ENCODE measurements at regions of chrX and their contacts with region 1.

Region 1: DNA sequence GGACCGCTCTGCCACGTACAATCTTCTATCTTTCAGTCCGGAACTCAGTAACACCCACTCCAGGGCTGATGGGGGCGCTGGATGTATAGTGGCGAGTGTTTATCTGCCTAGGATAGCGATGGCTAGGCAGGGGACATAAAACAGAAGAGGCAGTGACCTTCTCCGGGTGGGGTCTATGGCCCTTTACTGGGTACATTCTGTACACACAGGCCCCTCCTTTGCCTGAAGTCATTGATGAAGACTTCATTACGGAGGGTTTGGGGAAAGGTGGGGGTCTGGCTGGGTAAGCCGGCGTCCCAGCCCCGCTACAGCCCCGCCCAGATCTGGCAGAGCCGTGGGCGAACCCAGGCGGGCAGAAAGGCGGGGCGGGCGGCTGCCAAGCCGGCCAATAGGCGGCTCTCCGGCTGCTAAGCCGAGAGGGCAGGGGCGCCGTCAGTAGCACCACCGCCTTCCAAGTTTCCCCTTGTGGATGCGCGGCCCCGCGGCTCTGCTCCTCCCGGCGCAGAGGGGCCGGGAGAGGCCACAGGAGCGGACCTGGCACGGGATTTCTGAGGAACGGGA is at the start of gene CHST7:
- DNase-seq: peak; percentile 73
- H3K4me3 Mint-ChIP-seq: peak within 1 kb of the TSS; percentile 76
- H3K27ac Mint-ChIP-seq: peak within 1 kb of the TSS; percentile 91
- H3K4me1 Mint-ChIP-seq: peaks cover 47% of the 10 kb centered on the region
- H3K27me3 Mint-ChIP-seq: no peaks in the 10 kb centered on the region
- total RNA-seq, gene CHST7: 5.1 to 6.1 TPM

Region 2: GRCh38 chrX:46446727-46447378 is 126.6 kb before region 1 on chrX:
- CTCF ChIA-PET with region 1: no interaction called
- POLR2A ChIA-PET with region 1: no interaction called
- intact Hi-C with region 1: loop called (anchors 10 kb)
- DNase-seq: peak; percentile 91
- H3K4me3 Mint-ChIP-seq: peak overlapping the region; percentile 81
- H3K27ac Mint-ChIP-seq: peak overlapping the region; percentile 90
- H3K4me1 Mint-ChIP-seq: peaks cover 15% of the 10 kb centered on the region
- H3K27me3 Mint-ChIP-seq: no peaks in the 10 kb centered on the region

Region 3: DNA sequence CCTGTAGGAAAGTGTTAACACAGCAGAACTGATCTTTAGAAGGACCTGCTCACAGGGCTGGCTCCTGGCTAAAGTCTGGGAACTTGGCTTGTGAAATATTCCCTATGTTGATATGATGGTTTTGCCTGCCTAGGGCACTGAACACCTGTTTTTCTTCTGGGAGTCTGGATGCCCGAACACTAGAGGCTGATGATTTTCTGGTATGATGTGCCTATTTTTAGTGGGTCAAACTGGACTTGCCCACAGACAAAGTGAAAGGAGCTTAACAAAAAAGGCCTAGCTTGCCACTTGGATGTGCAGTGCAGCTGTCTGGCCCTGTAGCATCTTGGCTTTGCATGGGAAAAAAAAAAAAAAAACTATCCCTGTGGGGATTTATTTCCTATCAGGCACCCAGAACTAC is 67.3 kb before region 1 on chrX:
- CTCF ChIA-PET with region 1: no interaction called
- POLR2A ChIA-PET with region 1: no interaction called
- intact Hi-C with region 1: no loop called
- DNase-seq: no peak
- H3K4me3 Mint-ChIP-seq: no peak overlapping the region
- H3K27ac Mint-ChIP-seq: no peak overlapping the region
- H3K4me1 Mint-ChIP-seq: no peaks in the 10 kb centered on the region
- H3K27me3 Mint-ChIP-seq: no peaks in the 10 kb centered on the region

Region 4: GRCh38 chrX:46588263-46588662 is 14.9 kb after region 1 on chrX:
- CTCF ChIA-PET with region 1: interaction called, 6 read pairs
- POLR2A ChIA-PET with region 1: interaction called, 12 read pairs
- intact Hi-C with region 1: loop called (anchors 1 kb)
- DNase-seq: peak; percentile 61
- H3K4me3 Mint-ChIP-seq: peak overlapping the region; percentile 65
- H3K27ac Mint-ChIP-seq: peak overlapping the region; percentile 88
- H3K4me1 Mint-ChIP-seq: peaks cover 55% of the 10 kb centered on the region
- H3K27me3 Mint-ChIP-seq: no peaks in the 10 kb centered on the region

Region 5: GRCh38 chrX:46628460-46629371 is 55.3 kb after region 1 on chrX:
- CTCF ChIA-PET with region 1: no interaction called
- POLR2A ChIA-PET with region 1: interaction called, 3 read pairs
- intact Hi-C with region 1: loop called (anchors 1 kb)
- DNase-seq: peak; percentile 46
- H3K4me3 Mint-ChIP-seq: no peak overlapping the region
- H3K27ac Mint-ChIP-seq: peak overlapping the region; percentile 64
- H3K4me1 Mint-ChIP-seq: peaks cover 42% of the 10 kb centered on the region
- H3K27me3 Mint-ChIP-seq: no peaks in the 10 kb centered on the region

Region 6: DNA sequence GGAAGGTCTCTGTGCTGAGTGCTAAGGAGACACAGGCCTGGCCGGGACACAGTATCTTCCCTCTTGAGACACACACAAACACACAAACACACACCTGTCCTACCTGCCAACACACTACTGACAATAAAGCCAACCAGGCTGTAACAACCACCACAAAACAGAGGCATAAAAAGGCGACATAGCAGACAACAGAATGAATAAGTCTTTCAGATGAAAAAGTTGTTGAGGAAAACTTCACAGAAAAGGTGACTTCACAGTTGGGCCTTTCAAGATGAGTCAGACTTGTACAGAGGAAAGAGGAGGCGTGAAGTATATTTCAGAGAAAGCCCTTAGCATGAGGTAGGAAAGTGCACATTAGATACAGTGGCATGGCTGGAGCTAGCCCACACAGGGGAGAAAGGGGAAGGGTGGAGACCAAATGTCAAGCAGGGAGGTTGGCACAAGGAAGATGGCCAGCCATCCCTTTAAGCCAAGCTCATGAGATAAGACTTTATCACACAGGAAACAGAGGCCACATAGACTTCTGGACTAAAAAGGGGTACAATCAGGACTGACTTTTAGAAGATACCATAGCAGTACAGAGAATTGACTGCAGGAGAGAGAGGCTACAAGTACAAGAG is 131.5 kb after region 1 on chrX:
- CTCF ChIA-PET with region 1: interaction called, 3 read pairs
- POLR2A ChIA-PET with region 1: interaction called, 3 read pairs
- intact Hi-C with region 1: loop called (anchors 2 kb)
- DNase-seq: peak; percentile 49
- H3K4me3 Mint-ChIP-seq: peak overlapping the region; percentile 62
- H3K27ac Mint-ChIP-seq: peak overlapping the region; percentile 94
- H3K4me1 Mint-ChIP-seq: peaks cover 54% of the 10 kb centered on the region
- H3K27me3 Mint-ChIP-seq: no peaks in the 10 kb centered on the region